K562 (cell line): ENCODE measurements at regions of chrX and their contacts with region 1.

Region 1: GRCh38 chrX:153400146-153401127 is 713 bp downstream of the PNMA6E start:
- DNase-seq: peak; percentile 82 to 85 (median 83)
- ATAC-seq: peak; percentile 99
- H3K4me3 ChIP-seq: no peak overlapping the region
- H3K27ac ChIP-seq: no peak overlapping the region
- H3K4me1 ChIP-seq: peaks cover 4 to 22% of the 10 kb centered on the region in 2 experiments; a peak in 3 of 5 replicates
- H3K27me3 ChIP-seq: peaks cover 0 to 20% of the 10 kb centered on the region in 2 experiments; a peak in 2 of 5 replicates
- CTCF ChIP-seq: peak; percentile 99 to 100 (median 100)
- EP300 ChIP-seq: no peak
- POLR2A ChIP-seq: no peak
- RAD21 ChIP-seq: peak; percentile 50 to 75

Region 2: DNA sequence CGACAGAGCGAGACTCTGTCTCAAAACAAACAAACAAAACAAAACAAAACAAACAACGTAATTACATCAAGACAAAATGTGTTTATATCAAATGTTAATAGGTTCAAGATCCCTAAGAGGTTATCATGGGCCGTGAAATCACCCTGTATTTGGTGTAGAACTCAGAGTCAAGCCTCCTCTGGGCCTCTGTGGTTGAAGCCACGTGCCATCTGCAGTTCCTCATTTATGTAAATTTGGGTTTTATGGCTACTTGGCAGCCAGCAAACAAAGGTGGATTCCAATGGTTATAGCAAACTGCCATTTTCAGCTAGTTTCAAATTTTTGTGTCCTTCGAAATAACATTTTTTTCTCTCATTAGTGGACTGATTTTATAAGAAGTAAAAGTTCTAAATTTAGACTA is 553.2 kb before region 1 on chrX:
- CTCF ChIA-PET with region 1: no interaction called
- POLR2A ChIA-PET with region 1: no interaction called
- in situ Hi-C with region 1: no loop called
- intact Hi-C with region 1: no loop called
- DNase-seq: no peak
- ATAC-seq: no peak
- H3K4me3 ChIP-seq: no peak overlapping the region
- H3K27ac ChIP-seq: no peak overlapping the region
- H3K4me1 ChIP-seq: peaks cover 12 to 35% of the 10 kb centered on the region in 2 experiments
- H3K27me3 ChIP-seq: no peaks in the 10 kb centered on the region
- CTCF ChIP-seq: no peak
- EP300 ChIP-seq: no peak
- POLR2A ChIP-seq: no peak
- RAD21 ChIP-seq: no peak

Region 3: GRCh38 chrX:153361781-153362397 is 38.5 kb before region 1 on chrX:
- CTCF ChIA-PET with region 1: no interaction called
- POLR2A ChIA-PET with region 1: no interaction called
- in situ Hi-C with region 1: no loop called
- intact Hi-C with region 1: no loop called
- DNase-seq: no peak
- ATAC-seq: no peak
- H3K4me3 ChIP-seq: no peak overlapping the region
- H3K27ac ChIP-seq: no peak overlapping the region
- H3K4me1 ChIP-seq: 0 out of 5 replicates have a peak, but pooled peaks cover 0 to 3% of the 10 kb centered on the region in 2 experiments
- H3K27me3 ChIP-seq: no peaks in the 10 kb centered on the region
- CTCF ChIP-seq: no peak
- EP300 ChIP-seq: no peak
- POLR2A ChIP-seq: no peak
- RAD21 ChIP-seq: no peak

Region 4: DNA sequence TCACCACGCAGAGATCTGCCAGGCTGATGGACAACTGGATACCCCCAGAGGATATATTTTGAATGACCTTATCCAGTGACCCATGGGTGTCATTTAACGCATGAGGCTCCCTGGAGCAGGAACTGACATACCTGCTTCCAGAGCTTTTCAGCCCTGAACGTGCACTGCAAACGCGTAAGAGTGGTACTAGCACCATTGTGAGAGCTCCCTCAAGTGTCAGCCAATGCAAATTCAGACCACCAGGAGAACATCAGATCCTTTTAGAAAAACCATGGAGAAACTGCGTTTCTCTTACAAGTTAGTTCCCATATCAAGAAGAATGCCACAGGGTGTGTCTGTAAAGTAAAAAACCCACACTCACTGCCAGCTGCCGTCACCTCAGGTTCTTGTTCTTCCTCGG is 38.1 kb after region 1 on chrX:
- CTCF ChIA-PET with region 1: interaction called, 7 read pairs
- POLR2A ChIA-PET with region 1: no interaction called
- in situ Hi-C with region 1: no loop called
- intact Hi-C with region 1: loop called (anchors 5 kb)
- DNase-seq: peak in 1 of 4 experiments; percentile 52
- ATAC-seq: peak; percentile 78
- H3K4me3 ChIP-seq: no peak overlapping the region
- H3K27ac ChIP-seq: no peak overlapping the region
- H3K4me1 ChIP-seq: peaks cover 0 to 6% of the 10 kb centered on the region in 2 experiments; a peak in 2 of 5 replicates
- H3K27me3 ChIP-seq: peaks cover 7 to 20% of the 10 kb centered on the region in 2 experiments; a peak in 4 of 5 replicates
- CTCF ChIP-seq: peak; percentile 49 to 58 (median 49)
- EP300 ChIP-seq: no peak
- POLR2A ChIP-seq: no peak
- RAD21 ChIP-seq: peak; percentile 54 to 78